Posterior cingulate gyrus (tissue), 11 donors: ENCODE measurements at regions of chr14 and their contacts with region 1.

Region 1: GRCh38 chr14:92748259-92749016 is at the start of gene LGMN:
- DNase-seq: peak; percentile 96 to 100 (median 99)

Region 2: DNA sequence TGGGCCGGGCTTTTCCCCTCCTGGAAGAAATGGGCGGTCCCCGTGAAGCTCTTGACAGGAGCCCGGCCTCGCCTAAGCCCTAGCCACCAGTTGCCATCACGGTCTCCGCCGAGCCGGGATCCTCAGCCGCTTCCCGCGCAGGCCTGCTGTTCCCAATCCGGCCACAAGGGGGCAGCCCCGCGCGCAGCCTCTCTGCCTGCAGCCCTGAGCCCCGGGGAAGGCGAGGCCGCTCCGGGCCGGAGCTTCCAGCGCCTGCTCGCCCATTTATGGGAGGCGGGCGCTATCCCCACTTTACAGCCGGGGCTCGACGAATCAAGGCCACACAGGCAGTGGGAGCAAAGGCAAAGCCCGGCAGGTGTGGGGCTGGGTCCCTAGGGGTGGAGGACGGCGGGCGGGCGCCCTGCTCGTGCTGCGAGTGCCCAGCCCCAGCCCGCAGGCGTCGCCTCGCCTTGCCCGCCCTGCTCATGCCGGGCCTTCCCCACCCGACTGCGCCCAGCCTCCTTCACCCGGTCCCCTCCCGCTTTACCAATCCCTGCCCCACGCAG is 61.5 kb before region 1 on chr14:
- intact Hi-C with region 1: loop called (anchors 5 kb)
- DNase-seq: peak; percentile 72 to 97 (median 86)

Region 3: GRCh38 chr14:92793709-92794546 is 45.5 kb after region 1 on chr14 and contains the start of gene GOLGA5:
- intact Hi-C with region 1: loop called (anchors 2 kb)
- DNase-seq: peak; percentile 94 to 100 (median 98)

Region 4: GRCh38 chr14:93375673-93376156 is 627.3 kb after region 1 on chr14:
- intact Hi-C with region 1: no loop called
- DNase-seq: no peak